ENCODE measurements at regions of chr17 and their contacts with region 1.

Region 1: GRCh38 chr17:43393944-43394482 is 4.8 kb upstream of the ARL4D start:
- DNase-seq: peak; percentile 94

Region 2: GRCh38 chr17:43200127-43200526 is 193.9 kb before region 1 on chr17:
- intact Hi-C with region 1: no loop called
- DNase-seq: no peak

Region 3: GRCh38 chr17:43483674-43484372 is 89.8 kb after region 1 on chr17 and contains the start of gene DHX8:
- intact Hi-C with region 1: loop called (anchors 2 kb)
- DNase-seq: peak; percentile 99
- total RNA-seq, gene DHX8: 35.2 to 45.2 TPM

Region 4: DNA sequence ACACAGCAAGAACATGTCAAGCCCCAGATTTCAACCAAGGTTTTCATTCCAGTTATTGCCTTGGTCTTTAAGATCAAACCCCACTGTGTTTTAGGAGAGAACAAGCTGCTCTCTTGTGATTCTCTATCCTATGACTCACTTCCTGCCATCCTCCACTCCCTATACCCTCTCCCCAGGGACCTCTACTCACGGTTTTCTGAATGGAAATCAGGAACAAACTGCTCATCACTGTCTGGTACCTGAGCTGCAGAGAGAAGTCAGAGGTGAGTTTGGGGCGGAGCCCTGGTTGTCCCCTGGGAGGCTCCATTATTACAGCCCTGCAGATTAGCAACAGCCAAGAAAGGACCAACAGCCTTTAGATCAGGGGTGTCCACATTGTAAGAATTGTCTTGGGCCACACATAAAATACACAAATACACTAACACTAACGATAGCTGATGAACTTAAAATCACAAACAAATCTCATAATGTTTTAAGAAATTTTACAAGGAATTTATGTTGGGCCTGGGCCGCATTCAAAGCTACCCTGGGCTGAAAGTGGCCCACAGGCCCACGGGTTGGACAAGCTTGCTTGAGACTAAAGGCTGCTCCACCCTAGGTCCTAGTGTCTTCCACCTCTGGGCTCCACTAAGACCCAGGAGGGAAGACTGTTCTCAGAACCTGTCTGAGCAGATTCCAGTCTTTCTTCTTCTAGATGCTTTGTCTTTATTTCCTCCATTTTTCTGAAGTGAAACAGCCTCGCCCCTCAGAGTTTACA is 142.4 kb after region 1 on chr17:
- intact Hi-C with region 1: no loop called
- DNase-seq: peak; percentile 23